ENCODE measurements at regions of chr12 and their contacts with region 1.

Region 1: DNA sequence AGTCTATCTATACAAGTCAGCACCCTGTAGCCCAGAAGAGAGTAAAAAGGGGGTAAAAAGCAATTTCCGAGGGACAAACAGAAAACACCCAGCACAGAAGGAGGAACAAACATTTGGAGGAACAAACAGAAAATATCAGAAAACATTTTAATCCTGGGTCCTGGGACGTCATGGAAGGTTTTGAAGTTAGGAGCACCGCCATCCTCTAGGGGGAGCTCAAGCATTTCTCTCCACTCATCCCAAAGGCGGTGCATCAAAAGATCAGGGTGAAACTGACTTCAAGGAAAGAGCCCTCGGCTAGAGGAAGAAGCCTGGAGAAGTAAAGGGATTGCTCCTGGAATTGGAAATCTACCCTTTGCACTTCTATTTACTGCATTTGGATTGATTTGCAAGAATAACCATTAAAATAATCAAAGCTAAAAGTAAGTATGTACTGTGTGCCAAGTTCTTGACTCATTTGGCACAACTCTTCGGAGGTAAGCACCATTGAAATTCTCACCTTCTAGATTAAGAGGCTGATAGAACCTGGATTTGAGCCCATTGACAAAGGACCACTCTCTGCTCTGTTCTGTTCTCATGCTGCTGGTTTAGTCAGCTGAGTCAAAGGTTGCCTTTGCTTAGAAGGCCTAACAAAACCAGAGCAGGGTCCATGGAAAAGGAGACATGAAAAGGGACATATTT is 17.2 kb upstream of the POC1B start:
- DNase-seq: peak; percentile 68
- H3K4me3 ChIP-seq: no peak overlapping the region
- H3K27ac ChIP-seq: no peak overlapping the region
- H3K4me1 ChIP-seq: peaks cover 9% of the 10 kb centered on the region
- H3K27me3 ChIP-seq: no peaks in the 10 kb centered on the region
- CTCF ChIP-seq: peak; percentile 86 to 91

Region 2: DNA sequence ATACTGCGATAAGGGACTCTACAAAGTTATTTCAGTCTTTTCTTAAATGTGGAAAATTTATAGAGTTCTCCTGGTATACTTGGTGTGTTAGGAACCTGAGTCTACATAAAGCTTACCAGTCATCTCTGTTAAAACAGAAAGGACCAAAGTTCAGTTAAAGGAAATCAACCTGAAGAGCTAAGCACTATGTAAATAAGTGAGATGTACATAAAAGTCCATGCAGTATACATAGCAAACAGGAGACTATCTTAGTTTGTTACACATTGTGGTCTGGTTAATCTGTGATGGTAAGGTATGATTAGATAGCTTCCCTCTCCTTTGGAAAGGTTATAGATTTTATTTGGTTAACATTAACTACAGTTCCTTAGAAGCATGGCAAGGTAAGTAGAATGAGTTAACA is 89.7 kb after region 1 on chr12:
- CTCF ChIA-PET with region 1: no interaction called
- dilution Hi-C with region 1: no loop called
- in situ Hi-C with region 1: no loop called
- intact Hi-C with region 1: no loop called
- DNase-seq: no peak
- H3K4me3 ChIP-seq: no peak overlapping the region
- H3K27ac ChIP-seq: no peak overlapping the region
- H3K4me1 ChIP-seq: peaks cover 12% of the 10 kb centered on the region
- H3K27me3 ChIP-seq: no peaks in the 10 kb centered on the region
- CTCF ChIP-seq: no peak

Region 3: GRCh38 chr12:89857652-89858274 is 314.7 kb after region 1 on chr12:
- CTCF ChIA-PET with region 1: no interaction called
- dilution Hi-C with region 1: no loop called
- in situ Hi-C with region 1: no loop called
- intact Hi-C with region 1: loop called (anchors 2 kb)
- DNase-seq: no peak
- H3K4me3 ChIP-seq: no peak overlapping the region
- H3K27ac ChIP-seq: no peak overlapping the region
- H3K4me1 ChIP-seq: no peaks in the 10 kb centered on the region
- H3K27me3 ChIP-seq: no peaks in the 10 kb centered on the region
- CTCF ChIP-seq: no peak

Region 4: GRCh38 chr12:90013409-90013808 is 470.4 kb after region 1 on chr12:
- CTCF ChIA-PET with region 1: no interaction called
- dilution Hi-C with region 1: no loop called
- in situ Hi-C with region 1: no loop called
- intact Hi-C with region 1: loop called (anchors 1 kb)
- DNase-seq: no peak
- H3K4me3 ChIP-seq: no peak overlapping the region
- H3K27ac ChIP-seq: no peak overlapping the region
- H3K4me1 ChIP-seq: peaks cover 10% of the 10 kb centered on the region
- H3K27me3 ChIP-seq: no peaks in the 10 kb centered on the region
- CTCF ChIP-seq: peak in 1 of 2 donors; percentile 29

Region 5: DNA sequence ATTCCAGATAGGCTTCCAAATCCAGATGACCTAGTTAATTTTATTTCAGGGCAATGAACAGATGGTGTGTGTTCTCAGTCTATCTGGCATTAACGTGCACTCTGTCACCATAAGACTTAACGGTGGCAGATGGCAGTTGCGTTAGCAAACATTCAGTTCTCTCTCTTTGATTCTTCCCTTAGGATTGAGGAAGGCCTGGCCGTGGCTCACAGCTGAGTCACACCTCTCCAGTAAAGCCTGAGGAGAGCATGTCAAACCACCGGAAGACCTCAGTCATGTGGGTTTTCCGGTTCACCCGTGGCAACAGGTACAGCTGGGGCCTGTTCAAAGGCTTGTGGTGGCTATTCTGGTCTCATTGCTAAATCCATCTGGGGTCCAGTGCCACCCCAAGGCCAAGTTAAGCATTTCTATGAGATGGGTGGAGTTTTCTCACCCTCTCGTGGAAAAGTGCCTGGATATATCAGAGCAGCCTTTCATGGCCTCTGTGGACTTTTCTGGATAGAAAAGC is 710.7 kb after region 1 on chr12:
- CTCF ChIA-PET with region 1: no interaction called
- dilution Hi-C with region 1: no loop called
- in situ Hi-C with region 1: no loop called
- intact Hi-C with region 1: loop called (anchors 5 kb)
- DNase-seq: peak; percentile 97
- H3K4me3 ChIP-seq: no peak overlapping the region
- H3K27ac ChIP-seq: peak overlapping the region; percentile 45
- H3K4me1 ChIP-seq: peaks cover 24% of the 10 kb centered on the region
- H3K27me3 ChIP-seq: no peaks in the 10 kb centered on the region
- CTCF ChIP-seq: peak; percentile 46 to 55

Region 6: DNA sequence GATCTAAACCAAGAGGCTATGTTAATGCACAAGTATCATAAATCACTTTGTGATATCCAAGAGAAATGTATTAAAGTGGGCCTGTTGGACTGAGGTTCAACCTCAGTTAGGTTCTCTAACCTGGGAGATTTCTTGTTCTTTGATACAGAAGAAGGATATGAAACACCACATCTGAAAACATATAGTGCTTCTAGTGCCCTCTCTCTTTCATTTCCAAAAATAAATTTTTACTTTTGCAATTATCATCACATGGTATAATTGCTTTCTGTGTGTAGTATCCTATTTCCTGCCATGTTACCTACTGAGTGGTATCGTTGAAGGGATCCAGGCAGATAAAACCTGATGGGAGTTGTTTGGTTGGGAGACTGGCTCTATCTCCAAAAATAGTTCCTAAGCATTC is 1147.1 kb after region 1 on chr12:
- CTCF ChIA-PET with region 1: no interaction called
- dilution Hi-C with region 1: no loop called
- in situ Hi-C with region 1: no loop called
- intact Hi-C with region 1: loop called (anchors 5 kb)
- DNase-seq: no peak
- H3K4me3 ChIP-seq: no peak overlapping the region
- H3K27ac ChIP-seq: no peak overlapping the region
- H3K4me1 ChIP-seq: no peaks in the 10 kb centered on the region
- H3K27me3 ChIP-seq: no peaks in the 10 kb centered on the region
- CTCF ChIP-seq: no peak

Region 7: GRCh38 chr12:90854136-90854689 is 1311.2 kb after region 1 on chr12:
- CTCF ChIA-PET with region 1: no interaction called
- dilution Hi-C with region 1: no loop called
- in situ Hi-C with region 1: no loop called
- intact Hi-C with region 1: loop called (anchors 5 kb)
- DNase-seq: peak; percentile 25
- H3K4me3 ChIP-seq: no peak overlapping the region
- H3K27ac ChIP-seq: no peak overlapping the region
- H3K4me1 ChIP-seq: no peaks in the 10 kb centered on the region
- H3K27me3 ChIP-seq: no peaks in the 10 kb centered on the region
- CTCF ChIP-seq: peak; percentile 78 to 81

Region 8: DNA sequence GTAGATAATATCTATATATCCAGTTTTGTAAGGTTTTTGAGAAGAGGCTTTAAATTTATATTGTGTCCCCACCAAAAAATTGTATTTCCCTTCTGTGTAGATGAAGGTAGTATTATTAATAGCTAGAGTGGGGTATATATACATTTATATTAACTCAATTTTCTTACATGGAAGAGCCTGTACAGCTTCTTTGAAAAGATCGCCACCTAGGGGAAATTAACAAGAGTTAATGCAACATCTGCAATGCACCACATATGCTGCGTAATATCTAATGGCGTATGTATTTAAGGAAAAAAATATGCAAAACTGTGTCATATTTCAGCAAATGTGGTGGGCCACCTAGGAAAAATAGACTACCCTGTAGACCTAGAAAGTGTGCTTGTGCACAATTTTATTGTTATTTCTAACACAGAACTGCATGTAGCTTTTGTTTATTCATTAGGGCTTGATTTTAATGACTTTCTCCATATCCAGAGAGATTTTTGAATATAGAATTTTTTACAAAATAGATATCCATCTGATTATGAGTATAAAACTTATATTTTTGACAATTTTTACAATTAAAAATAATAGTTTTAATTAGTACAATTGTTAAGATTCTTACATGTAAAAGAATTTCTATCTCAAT is 1397.9 kb after region 1 on chr12:
- CTCF ChIA-PET with region 1: no interaction called
- dilution Hi-C with region 1: no loop called
- in situ Hi-C with region 1: no loop called
- intact Hi-C with region 1: loop called (anchors 5 kb)
- DNase-seq: peak; percentile 32
- H3K4me3 ChIP-seq: no peak overlapping the region
- H3K27ac ChIP-seq: no peak overlapping the region
- H3K4me1 ChIP-seq: peaks cover 9% of the 10 kb centered on the region
- H3K27me3 ChIP-seq: no peaks in the 10 kb centered on the region
- CTCF ChIP-seq: peak; percentile 61 to 78

Measured in mammary epithelial cell (primary cell).